Activated T-helper 2 cell treated with anti-CD3 and anti-CD28 coated beads, Interferon-gamma antibody, Interleukin-2, Interleukin-4, amounts not matched to agents 10 μg/mL and 5 μg/mL and 100 μg/mL, durations not matched to agents 14 hours and 24 hours and 36 hours (primary cell): ENCODE measurements at regions of chr3 and their contacts with region 1.

Region 1: DNA sequence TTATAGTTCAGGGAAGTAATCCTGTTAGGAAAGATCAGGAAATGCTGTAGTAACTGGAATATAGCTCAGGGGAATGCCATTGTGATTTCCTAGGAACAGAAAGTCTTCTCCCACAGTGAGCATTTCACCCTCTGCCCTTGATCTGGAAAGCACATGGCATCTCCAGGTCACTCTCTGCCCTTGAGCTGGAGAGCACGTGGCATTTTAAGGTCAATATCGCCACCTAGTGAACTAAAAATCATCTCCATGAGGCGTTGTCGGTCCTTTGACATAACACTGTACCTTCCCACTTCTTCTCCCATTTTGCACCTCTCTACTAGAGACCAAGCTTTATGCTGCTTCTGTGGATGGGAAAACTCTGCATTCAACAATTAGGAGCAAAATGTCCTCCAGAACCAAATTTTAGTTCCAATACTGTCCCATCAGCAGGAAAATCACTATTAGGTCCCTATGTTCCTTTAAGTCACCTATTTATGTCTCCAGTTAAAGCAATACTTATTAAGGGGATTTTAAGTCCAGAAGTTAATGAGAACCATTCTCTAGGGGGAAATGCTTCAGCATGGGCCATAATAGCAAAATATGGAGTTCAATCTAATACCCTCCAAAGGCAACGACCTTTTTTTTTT is 54.7 kb upstream of the GK5 start:
- DNase-seq: peak; percentile 26
- H3K4me3 Mint-ChIP-seq: no peak overlapping the region
- H3K27ac Mint-ChIP-seq: peak overlapping the region; percentile 24
- H3K4me1 Mint-ChIP-seq: peaks cover 28% of the 10 kb centered on the region
- H3K27me3 Mint-ChIP-seq: no peaks in the 10 kb centered on the region

Region 2: GRCh38 chr3:141959921-141960554 is 320.0 kb before region 1 on chr3:
- intact Hi-C with region 1: loop called (anchors 1 kb)
- DNase-seq: no peak
- H3K4me3 Mint-ChIP-seq: no peak overlapping the region
- H3K27ac Mint-ChIP-seq: no peak overlapping the region
- H3K4me1 Mint-ChIP-seq: peaks cover 4% of the 10 kb centered on the region
- H3K27me3 Mint-ChIP-seq: no peaks in the 10 kb centered on the region

Region 3: GRCh38 chr3:142022381-142022780 is 257.7 kb before region 1 on chr3:
- intact Hi-C with region 1: loop called (anchors 2 kb)
- DNase-seq: no peak
- H3K4me3 Mint-ChIP-seq: no peak overlapping the region
- H3K27ac Mint-ChIP-seq: peak overlapping the region; percentile 53
- H3K4me1 Mint-ChIP-seq: peaks cover 36% of the 10 kb centered on the region
- H3K27me3 Mint-ChIP-seq: no peaks in the 10 kb centered on the region

Region 4: DNA sequence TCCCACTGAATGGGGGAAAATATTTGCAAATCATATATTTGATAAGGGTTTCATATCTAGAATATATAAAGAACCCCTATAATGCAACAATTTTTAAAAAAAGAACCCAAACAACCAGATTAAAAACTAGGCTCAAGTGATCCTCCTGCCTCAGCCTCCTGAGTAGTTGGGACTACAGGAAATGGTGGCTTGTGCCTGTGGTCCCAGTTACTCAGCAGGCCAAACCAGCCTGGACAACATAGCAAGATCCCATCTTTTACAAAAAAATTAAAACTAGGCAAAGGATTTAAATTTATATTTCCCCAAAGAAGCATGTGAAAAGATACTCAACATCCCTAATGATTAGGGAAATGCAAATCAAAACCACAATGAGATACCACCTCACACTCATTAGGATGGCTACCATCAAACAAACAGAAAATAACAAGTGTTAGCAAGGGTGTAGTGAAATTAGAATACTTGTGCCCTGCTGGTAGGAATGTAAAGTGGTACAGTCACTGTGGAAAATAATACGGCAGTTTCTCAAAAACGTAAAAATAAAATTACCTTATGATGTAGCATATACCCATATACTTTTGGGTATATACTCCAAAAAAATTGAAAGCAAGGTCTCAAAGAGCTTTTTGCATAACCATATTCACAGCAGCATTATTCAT is 150.4 kb before region 1 on chr3:
- intact Hi-C with region 1: loop called (anchors 1 kb)
- DNase-seq: no peak
- H3K4me3 Mint-ChIP-seq: no peak overlapping the region
- H3K27ac Mint-ChIP-seq: no peak overlapping the region
- H3K4me1 Mint-ChIP-seq: no peaks in the 10 kb centered on the region
- H3K27me3 Mint-ChIP-seq: no peaks in the 10 kb centered on the region

Region 5: GRCh38 chr3:142215106-142215505 is 65.0 kb before region 1 on chr3:
- intact Hi-C with region 1: no loop called
- DNase-seq: no peak
- H3K4me3 Mint-ChIP-seq: no peak overlapping the region
- H3K27ac Mint-ChIP-seq: no peak overlapping the region
- H3K4me1 Mint-ChIP-seq: peaks cover 10% of the 10 kb centered on the region
- H3K27me3 Mint-ChIP-seq: no peaks in the 10 kb centered on the region

Region 6: GRCh38 chr3:142332390-142332789 is 52.3 kb after region 1 on chr3:
- intact Hi-C with region 1: no loop called
- DNase-seq: no peak
- H3K4me3 Mint-ChIP-seq: no peak overlapping the region
- H3K27ac Mint-ChIP-seq: no peak overlapping the region
- H3K4me1 Mint-ChIP-seq: no peaks in the 10 kb centered on the region
- H3K27me3 Mint-ChIP-seq: no peaks in the 10 kb centered on the region

Region 7: DNA sequence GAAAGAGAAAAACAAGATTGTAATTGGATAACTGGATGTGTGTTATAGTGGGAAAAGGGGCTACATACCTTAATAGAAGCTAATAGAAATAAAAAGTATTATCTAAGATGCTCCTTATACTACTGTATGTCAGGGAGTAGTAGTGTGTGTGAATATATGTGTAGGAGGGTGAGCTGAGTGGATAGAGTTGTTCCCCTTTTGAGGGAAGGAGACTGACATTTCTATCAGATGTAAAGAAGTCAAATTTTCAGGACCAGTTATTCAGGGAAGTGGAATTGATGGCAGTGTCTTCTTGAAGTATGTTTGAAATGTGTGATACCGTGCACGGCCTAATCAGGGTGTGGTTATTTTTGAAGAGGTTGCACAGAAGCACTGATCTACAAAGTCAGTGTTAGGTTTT is 559.8 kb after region 1 on chr3:
- intact Hi-C with region 1: no loop called
- DNase-seq: no peak
- H3K4me3 Mint-ChIP-seq: no peak overlapping the region
- H3K27ac Mint-ChIP-seq: no peak overlapping the region
- H3K4me1 Mint-ChIP-seq: no peaks in the 10 kb centered on the region
- H3K27me3 Mint-ChIP-seq: peaks cover 21% of the 10 kb centered on the region